ENCODE measurements at regions of chr1 and their contacts with region 1.

Region 1: GRCh38 chr1:217534566-217534965 is 96.3 kb downstream of the GPATCH2 start:
- DNase-seq: no peak
- ATAC-seq: no peak
- H3K4me3 ChIP-seq: no peak overlapping the region
- H3K27ac ChIP-seq: no peak overlapping the region
- H3K4me1 ChIP-seq: peaks cover 0 to 2% of the 10 kb centered on the region in 2 donors
- H3K27me3 ChIP-seq: no peaks in the 10 kb centered on the region

Region 2: GRCh38 chr1:217521317-217521716 is 13.2 kb before region 1 on chr1:
- intact Hi-C with region 1: loop called in 1 of 2 experiments (anchors 2 kb)
- DNase-seq: no peak
- ATAC-seq: no peak
- H3K4me3 ChIP-seq: no peak overlapping the region
- H3K27ac ChIP-seq: no peak overlapping the region
- H3K4me1 ChIP-seq: no peaks in the 10 kb centered on the region
- H3K27me3 ChIP-seq: no peaks in the 10 kb centered on the region

Measured in aorta (tissue), 5 donors.